Dendritic cell treated with granulocyte-macrophage colony-stimulating factor and Interleukin-4, amounts not matched to agents 40 ng/mL and 50 ng/mL, for 4 days (primary cell): ENCODE measurements at regions of chr4 and their contacts with region 1.

Region 1: DNA sequence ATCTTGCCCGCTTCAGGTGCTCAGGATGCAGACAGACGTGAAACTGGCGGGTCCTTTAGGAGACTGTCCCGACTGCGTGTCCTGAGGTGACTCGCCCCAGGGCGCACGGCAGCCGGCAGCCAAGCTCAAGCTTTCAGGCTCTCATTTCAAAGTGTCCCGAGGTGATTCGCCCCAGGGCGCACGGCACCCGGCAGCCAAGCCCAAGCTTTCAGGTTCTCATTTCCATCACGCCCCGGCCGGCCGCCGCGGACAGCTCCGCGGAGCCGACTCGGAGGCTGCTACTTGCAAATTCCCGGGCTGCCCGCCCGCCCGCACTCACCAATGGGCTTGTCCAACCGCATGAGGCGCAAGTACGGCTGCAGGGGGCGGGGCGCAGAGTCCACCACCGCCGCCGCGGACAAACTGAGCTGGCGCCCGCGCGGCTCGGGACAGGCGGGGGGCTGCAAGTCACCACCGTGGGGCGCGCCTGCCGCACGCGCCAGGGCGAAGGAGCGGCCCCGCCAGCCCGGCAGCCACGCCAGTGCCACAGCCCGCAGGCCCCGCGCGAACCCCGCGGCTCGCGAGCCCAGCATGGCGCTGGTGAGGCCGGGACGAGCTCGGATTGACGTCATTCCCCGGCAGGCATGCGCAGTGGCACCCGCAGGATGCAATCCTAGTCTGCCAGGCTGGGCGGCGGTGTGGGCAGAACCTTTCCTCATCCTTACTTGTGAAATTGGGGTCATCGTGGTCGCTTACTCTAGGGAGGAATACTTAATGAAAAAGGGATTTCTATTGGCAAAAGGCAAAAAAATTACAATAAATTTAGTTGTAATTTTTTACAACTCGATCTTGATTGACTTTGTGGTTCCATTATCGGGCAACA is at the start of gene COQ2:
- H3K4me3 Mint-ChIP-seq: peak within 1 kb of the TSS; percentile 92
- H3K27ac Mint-ChIP-seq: peak within 1 kb of the TSS; percentile 99
- H3K4me1 Mint-ChIP-seq: peaks cover 49% of the 10 kb centered on the region
- H3K27me3 Mint-ChIP-seq: no peaks in the 10 kb centered on the region

Region 2: GRCh38 chr4:82900331-82901128 is 383.9 kb before region 1 on chr4 and contains the start of gene THAP9:
- intact Hi-C with region 1: loop called (anchors 5 kb)
- H3K4me3 Mint-ChIP-seq: no peak within 1 kb of the TSS
- H3K27ac Mint-ChIP-seq: no peak within 1 kb of the TSS
- H3K4me1 Mint-ChIP-seq: peaks cover 11% of the 10 kb centered on the region
- H3K27me3 Mint-ChIP-seq: no peaks in the 10 kb centered on the region

Region 3: DNA sequence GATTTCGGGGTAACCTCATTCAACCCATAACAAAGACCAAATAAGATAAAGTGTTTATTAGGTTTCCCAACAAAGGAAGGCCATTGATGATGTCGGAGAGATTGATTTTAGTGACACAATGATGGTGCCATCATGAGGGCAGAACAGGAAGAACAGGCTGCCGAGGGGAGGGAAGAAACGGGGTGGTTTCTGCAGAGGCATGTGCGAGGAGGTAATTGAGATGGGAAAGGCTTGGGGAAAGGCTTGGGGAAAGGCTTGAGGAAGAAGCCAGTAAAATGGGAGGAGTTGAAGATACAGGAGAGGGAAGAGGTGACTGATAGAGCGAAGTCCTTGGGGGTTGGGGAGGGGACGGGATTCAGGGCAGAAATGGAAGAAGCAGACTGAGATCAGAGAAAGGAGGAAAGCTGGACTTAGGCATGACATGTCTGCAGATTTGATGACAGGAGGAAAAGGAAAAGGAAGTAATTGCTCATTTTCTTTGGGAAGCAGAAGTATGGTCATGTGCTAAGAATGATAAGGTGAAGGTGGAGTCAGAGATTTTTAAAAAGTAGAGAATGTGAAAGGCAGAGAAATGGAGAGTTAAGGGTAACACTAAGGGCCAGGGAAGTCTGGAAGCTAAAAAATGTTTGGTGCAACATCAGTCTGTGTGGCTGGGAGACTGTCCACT is 44.2 kb after region 1 on chr4:
- intact Hi-C with region 1: loop called (anchors 2 kb)
- H3K4me3 Mint-ChIP-seq: peak overlapping the region; percentile 17
- H3K27ac Mint-ChIP-seq: peak overlapping the region; percentile 49
- H3K4me1 Mint-ChIP-seq: peaks cover 51% of the 10 kb centered on the region
- H3K27me3 Mint-ChIP-seq: no peaks in the 10 kb centered on the region

Region 4: GRCh38 chr4:83334425-83335241 is 50.2 kb after region 1 on chr4 and contains the start of gene HPSE:
- intact Hi-C with region 1: loop called (anchors 2 kb)
- H3K4me3 Mint-ChIP-seq: peak within 1 kb of the TSS; percentile 80
- H3K27ac Mint-ChIP-seq: peak within 1 kb of the TSS; percentile 67
- H3K4me1 Mint-ChIP-seq: peaks cover 46% of the 10 kb centered on the region
- H3K27me3 Mint-ChIP-seq: peaks cover 6% of the 10 kb centered on the region